Thyroid gland (tissue), 4 donors: ENCODE measurements at regions of chr19 and their contacts with region 1.

Region 1: GRCh38 chr19:6048808-6049405 is 61.4 kb downstream of the RFX2 start:
- DNase-seq: peak; percentile 75 to 83
- H3K4me3 ChIP-seq: peak overlapping the region in 1 of 3 donors; percentile 8
- H3K27ac ChIP-seq: no peak overlapping the region
- H3K4me1 ChIP-seq: peaks cover 6 to 15% of the 10 kb centered on the region in 2 donors
- H3K27me3 ChIP-seq: no peaks in the 10 kb centered on the region
- CTCF ChIP-seq: peak; percentile 76 to 88 (median 82)
- POLR2A ChIP-seq: no peak

Region 2: GRCh38 chr19:6023085-6023682 is 25.7 kb before region 1 on chr19:
- intact Hi-C with region 1: no loop called
- DNase-seq: no peak
- H3K4me3 ChIP-seq: no peak overlapping the region
- H3K27ac ChIP-seq: peak overlapping the region in 1 of 3 donors; percentile 5
- H3K4me1 ChIP-seq: peaks cover 0 to 10% of the 10 kb centered on the region in 2 donors
- H3K27me3 ChIP-seq: no peaks in the 10 kb centered on the region
- CTCF ChIP-seq: no peak
- POLR2A ChIP-seq: no peak

Region 3: GRCh38 chr19:6126335-6126974 is 77.5 kb after region 1 on chr19:
- intact Hi-C with region 1: loop called (anchors 2 kb)
- DNase-seq: no peak
- H3K4me3 ChIP-seq: no peak overlapping the region
- H3K27ac ChIP-seq: no peak overlapping the region
- H3K4me1 ChIP-seq: no peaks in the 10 kb centered on the region
- H3K27me3 ChIP-seq: no peaks in the 10 kb centered on the region
- CTCF ChIP-seq: peak in 1 of 6 experiments; percentile 8
- POLR2A ChIP-seq: no peak

Region 4: GRCh38 chr19:6292006-6292405 is 243.1 kb after region 1 on chr19:
- intact Hi-C with region 1: loop called (anchors 10 kb)
- DNase-seq: no peak
- H3K4me3 ChIP-seq: no peak overlapping the region
- H3K27ac ChIP-seq: no peak overlapping the region
- H3K4me1 ChIP-seq: no peaks in the 10 kb centered on the region
- H3K27me3 ChIP-seq: no peaks in the 10 kb centered on the region
- CTCF ChIP-seq: no peak
- POLR2A ChIP-seq: no peak